Activated T-helper 2 cell treated with anti-CD3 and anti-CD28 coated beads, Interferon-gamma antibody, Interleukin-2, Interleukin-4, amounts not matched to agents 10 μg/mL and 5 μg/mL and 100 μg/mL, durations not matched to agents 14 hours and 24 hours and 36 hours (primary cell): ENCODE measurements at regions of chr17 and their contacts with region 1.

Region 1: DNA sequence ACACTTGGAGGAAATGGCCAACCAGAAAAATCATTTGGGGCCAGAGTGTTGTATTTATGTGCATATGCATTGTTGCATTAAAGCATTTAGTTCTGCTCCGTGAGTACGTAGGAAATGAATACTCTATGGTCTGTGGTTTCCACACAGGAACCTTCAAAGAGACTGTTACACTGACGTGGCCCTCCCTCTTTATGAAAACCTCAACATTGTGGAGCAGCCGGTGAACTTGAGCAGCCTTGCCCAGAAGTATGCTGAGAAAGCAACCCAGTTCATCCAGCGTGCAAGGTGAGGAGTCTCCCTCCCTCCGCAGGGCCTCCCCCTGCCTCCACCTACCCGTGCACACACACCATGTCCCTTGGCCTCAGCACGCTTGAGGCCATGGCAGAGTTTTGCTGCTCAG is 65.2 kb downstream of the ARSG start:
- DNase-seq: peak; percentile 75
- H3K4me3 Mint-ChIP-seq: peak overlapping the region; percentile 73
- H3K27ac Mint-ChIP-seq: peak overlapping the region; percentile 86
- H3K4me1 Mint-ChIP-seq: peaks cover 57% of the 10 kb centered on the region
- H3K27me3 Mint-ChIP-seq: no peaks in the 10 kb centered on the region

Region 2: DNA sequence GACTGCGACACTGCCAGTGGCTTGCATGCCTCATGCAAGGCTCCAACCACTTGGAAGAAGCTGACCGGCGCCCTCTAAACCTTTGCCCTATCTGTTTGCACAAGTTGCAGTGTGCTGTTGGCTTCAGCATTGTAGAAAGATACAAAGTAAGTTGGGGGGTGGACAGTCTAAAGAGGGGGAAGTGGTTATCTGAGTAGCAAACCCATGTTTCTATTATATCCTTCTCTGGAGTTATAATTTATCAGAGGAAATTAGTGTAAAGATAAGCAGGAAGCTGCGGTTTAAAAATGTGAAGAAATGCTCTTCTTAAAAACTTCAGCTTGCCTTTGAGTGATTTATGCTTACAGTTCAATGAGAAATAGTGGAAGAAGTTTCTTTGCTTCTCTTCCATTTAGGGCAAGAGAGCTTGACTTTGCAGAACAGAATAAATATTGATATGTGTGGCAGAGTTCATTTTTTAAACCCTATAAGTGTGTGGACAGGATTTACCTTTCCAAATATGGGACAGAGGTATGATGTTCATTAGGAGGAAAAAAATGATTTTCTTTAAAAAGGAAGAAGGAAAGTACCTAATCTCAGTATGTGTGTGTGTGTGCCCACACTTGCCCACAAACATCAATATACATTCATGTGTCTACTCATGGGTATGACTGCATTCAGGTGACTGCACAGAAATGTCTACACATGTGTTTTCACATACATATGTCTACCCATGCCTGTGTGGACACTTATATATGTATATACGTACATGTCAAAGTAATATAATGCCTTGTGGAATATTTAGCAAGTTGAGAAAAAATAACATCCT is 100.6 kb before region 1 on chr17:
- intact Hi-C with region 1: no loop called
- DNase-seq: no peak
- H3K4me3 Mint-ChIP-seq: peak overlapping the region; percentile 48
- H3K27ac Mint-ChIP-seq: peak overlapping the region; percentile 87
- H3K4me1 Mint-ChIP-seq: peaks cover 77% of the 10 kb centered on the region
- H3K27me3 Mint-ChIP-seq: no peaks in the 10 kb centered on the region

Region 3: GRCh38 chr17:68318103-68318991 is 38.2 kb before region 1 on chr17:
- intact Hi-C with region 1: no loop called
- DNase-seq: no peak
- H3K4me3 Mint-ChIP-seq: no peak overlapping the region
- H3K27ac Mint-ChIP-seq: no peak overlapping the region
- H3K4me1 Mint-ChIP-seq: peaks cover 24% of the 10 kb centered on the region
- H3K27me3 Mint-ChIP-seq: no peaks in the 10 kb centered on the region

Region 4: GRCh38 chr17:68398691-68399637 is 42.4 kb after region 1 on chr17:
- intact Hi-C with region 1: loop called (anchors 2 kb)
- DNase-seq: peak; percentile 19
- H3K4me3 Mint-ChIP-seq: peak overlapping the region; percentile 39
- H3K27ac Mint-ChIP-seq: peak overlapping the region; percentile 84
- H3K4me1 Mint-ChIP-seq: peaks cover 31% of the 10 kb centered on the region
- H3K27me3 Mint-ChIP-seq: no peaks in the 10 kb centered on the region